ENCODE measurements at regions of chr10 and their contacts with region 1.

Region 1: DNA sequence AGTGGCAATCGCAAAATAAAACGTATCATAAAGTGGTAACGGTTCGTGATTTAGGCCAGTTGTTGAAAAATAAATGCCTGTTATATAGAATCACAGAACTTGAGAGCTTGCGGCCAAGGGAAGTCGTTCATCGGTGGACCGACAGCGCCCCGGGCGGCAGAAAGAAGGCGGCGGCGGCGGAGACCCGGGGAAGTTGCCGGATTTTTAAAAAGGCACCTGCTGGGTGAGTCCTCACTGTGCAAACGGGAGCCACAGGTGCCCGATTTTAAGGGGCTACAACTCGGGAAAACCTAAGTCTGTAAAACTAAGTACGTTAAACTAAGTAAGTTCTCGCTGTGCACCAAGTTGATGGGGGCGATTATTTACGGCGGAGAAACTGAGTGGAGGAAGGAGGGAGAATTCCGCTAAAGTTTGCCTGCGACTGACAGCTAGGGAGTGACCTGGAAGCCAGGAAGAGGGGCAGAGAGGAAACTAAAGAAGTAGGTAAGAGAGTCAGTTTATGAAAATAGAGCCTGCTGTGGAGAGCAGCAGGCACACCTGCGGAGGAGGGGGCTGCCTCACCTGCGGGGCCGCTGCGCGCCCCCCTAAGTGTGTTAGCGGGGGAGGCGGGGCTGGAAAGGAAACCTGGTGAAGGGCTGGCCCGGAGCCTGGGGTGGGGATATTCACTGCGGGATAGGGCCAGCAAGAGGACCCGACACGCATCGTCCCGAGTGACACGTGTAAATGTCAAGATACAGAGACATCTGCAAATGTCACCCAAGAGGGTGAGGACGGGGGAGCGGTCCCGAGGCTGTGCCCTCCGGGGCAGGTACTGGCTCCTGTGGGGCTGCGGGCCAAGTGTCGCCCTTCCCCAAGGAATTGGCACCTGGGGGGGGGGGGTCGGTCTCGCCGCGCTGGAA is 1.0 kb downstream of the ADAM12 start:
- DNase-seq: peak; percentile 83
- ATAC-seq: peak; percentile 70
- H3K4me3 ChIP-seq: peak overlapping the region; percentile 43
- H3K27ac ChIP-seq: no peak overlapping the region
- H3K4me1 ChIP-seq: peaks cover 14% of the 10 kb centered on the region
- H3K27me3 ChIP-seq: peaks cover 30% of the 10 kb centered on the region
- CTCF ChIP-seq: peak; percentile 72

Region 2: DNA sequence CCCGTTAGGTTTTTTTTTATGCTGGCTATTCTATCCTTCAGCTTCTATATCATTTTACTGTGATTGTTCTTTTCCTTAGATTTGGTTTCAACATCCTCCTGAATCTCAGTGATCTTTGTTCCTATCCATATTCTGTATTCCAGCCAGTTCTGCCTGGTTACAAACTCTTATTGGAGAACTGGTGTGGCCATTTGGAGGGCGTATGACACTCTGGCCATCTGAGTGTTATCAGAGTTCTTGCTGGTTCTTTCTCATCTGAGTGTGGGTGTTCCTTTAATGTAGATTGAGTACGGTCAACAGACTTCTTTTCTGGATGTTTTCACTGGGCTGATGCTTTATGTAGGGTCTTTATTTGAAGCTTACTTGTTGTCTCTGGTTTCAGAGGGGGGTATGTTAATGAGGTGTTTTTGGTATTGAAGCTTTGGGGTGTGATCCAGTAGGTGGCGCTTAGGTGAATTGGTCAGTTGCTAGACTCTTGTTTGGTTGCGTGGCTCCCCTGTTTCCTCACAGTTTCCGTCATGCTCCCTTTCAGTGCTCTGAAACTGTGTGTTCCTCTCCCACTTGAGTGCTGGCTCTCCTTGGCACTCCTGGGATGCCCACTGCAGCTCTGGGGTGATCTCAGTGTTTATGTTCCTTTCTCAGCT is 410.2 kb before region 1 on chr10:
- intact Hi-C with region 1: loop called (anchors 10 kb)
- DNase-seq: no peak
- ATAC-seq: no peak
- H3K4me3 ChIP-seq: no peak overlapping the region
- H3K27ac ChIP-seq: no peak overlapping the region
- H3K4me1 ChIP-seq: no peaks in the 10 kb centered on the region
- H3K27me3 ChIP-seq: no peaks in the 10 kb centered on the region
- CTCF ChIP-seq: no peak

Measured in upper lobe of right lung (tissue), 1 donor.